Caco-2 (cell line): ENCODE measurements at regions of chr11 and their contacts with region 1.

Region 1: GRCh38 chr11:84780689-84781293 is 846.4 kb downstream of the DLG2 start:
- DNase-seq: peak in 1 of 2 experiments; percentile 21
- H3K4me3 ChIP-seq: no peak overlapping the region
- H3K4me3 Mint-ChIP-seq: no peak overlapping the region
- H3K27ac Mint-ChIP-seq: no peak overlapping the region
- H3K4me1 ChIP-seq: no peaks in the 10 kb centered on the region
- H3K4me1 Mint-ChIP-seq: no peaks in the 10 kb centered on the region
- H3K27me3 ChIP-seq: no peaks in the 10 kb centered on the region
- H3K27me3 Mint-ChIP-seq: peaks cover 12% of the 10 kb centered on the region
- CTCF ChIP-seq: peak; percentile 48 to 78

Region 2: DNA sequence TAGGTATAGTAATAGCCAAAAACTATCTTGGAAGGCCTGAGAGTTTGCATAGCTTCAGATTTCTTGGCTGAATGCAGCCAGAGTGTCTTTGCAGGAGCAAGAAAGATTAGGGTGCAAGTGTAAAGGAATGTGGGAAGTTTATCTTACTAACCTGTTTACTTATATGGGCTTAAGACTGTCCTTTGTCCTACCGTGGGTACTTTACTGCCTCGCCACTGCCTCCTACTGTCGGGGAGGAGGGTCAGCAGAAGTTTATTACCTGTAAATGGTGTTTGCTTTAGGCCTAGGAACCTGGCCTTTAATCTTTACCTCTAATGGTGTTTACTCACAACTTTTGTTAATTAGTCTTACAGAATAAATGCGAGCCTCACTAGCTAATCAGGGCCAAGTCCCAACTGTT is 212.6 kb after region 1 on chr11:
- CTCF ChIA-PET with region 1: interaction called, 3 read pairs
- POLR2A ChIA-PET with region 1: no interaction called
- intact Hi-C with region 1: loop called (anchors 1 kb)
- DNase-seq: peak; percentile 40 to 42
- H3K4me3 ChIP-seq: no peak overlapping the region
- H3K4me3 Mint-ChIP-seq: no peak overlapping the region
- H3K27ac Mint-ChIP-seq: no peak overlapping the region
- H3K4me1 ChIP-seq: no peaks in the 10 kb centered on the region
- H3K4me1 Mint-ChIP-seq: no peaks in the 10 kb centered on the region
- H3K27me3 ChIP-seq: no peaks in the 10 kb centered on the region
- H3K27me3 Mint-ChIP-seq: no peaks in the 10 kb centered on the region
- CTCF ChIP-seq: peak; percentile 54 to 59

Region 3: DNA sequence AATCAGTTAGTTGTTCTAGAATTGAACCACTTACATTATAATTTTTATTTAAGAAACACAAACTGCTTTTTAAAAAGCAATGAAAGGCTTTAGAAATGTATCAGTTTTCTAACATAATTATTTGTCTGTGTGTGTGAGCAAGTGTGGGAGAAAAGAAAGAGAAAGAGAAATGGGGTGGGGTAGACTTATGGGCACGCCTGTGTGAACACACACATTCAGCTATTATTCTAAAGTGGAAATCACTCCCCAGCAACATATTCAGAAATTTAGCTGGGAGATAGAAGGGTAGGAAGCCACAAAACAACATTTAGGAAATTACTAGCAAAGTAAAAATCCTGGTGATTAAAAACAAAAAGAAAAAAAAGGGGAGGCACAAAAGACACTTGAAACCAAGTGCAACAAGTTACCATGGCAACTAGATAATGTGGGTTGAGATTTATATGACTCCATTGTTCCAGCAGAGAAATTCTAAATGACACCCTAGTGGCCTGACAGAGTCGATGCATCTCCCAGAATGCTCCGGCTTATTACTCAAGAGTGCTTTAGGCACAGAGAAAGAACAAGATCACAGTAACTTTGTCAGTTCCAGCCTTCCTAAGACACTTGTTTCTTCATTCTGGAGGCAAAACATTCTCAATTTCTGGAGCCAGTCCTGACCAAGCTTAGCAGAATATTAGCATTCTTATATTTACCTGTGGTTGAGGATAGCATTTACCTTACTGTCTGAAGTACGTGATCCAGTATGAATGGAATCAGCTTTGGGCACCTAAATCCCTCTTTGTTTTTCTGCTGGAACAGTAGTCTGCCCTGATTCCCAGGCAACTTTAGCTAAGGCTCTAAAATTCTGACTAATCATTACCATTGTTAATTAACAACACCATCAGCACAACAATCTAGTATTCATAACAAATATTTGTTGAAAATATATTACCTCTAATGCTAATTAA is 401.9 kb after region 1 on chr11:
- CTCF ChIA-PET with region 1: no interaction called
- POLR2A ChIA-PET with region 1: no interaction called
- intact Hi-C with region 1: loop called (anchors 5 kb)
- DNase-seq: peak; percentile 61 to 70
- H3K4me3 ChIP-seq: no peak overlapping the region
- H3K4me3 Mint-ChIP-seq: no peak overlapping the region
- H3K27ac Mint-ChIP-seq: no peak overlapping the region
- H3K4me1 ChIP-seq: peaks cover 9% of the 10 kb centered on the region
- H3K4me1 Mint-ChIP-seq: peaks cover 16% of the 10 kb centered on the region
- H3K27me3 ChIP-seq: no peaks in the 10 kb centered on the region
- H3K27me3 Mint-ChIP-seq: no peaks in the 10 kb centered on the region
- CTCF ChIP-seq: peak; percentile 72 to 80